CD8-positive, alpha-beta T cell (primary cell): ENCODE measurements at regions of chr5 and their contacts with region 1.

Region 1: DNA sequence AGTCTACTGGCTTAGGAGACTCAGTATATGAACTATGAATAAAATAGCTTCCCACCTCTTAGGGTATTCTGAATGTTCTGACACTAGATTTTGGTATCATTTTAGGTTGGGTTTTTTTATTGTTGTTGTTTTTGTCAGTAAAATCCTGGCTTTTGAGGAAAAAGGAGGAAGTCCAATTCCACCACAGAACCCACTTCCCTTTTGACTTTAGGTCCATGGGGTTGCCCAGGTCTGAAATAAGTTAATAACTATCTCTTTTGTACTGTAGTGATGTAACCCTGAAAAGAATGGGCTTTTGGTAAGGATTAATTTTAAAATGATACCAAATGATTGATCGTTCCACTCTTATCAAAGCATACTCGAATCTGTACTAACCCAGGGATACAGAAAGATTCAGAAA is 29.1 kb upstream of the IL12B start:
- DNase-seq: no peak
- ATAC-seq: no peak
- H3K4me3 ChIP-seq: no peak overlapping the region
- H3K4me3 Mint-ChIP-seq: no peak overlapping the region
- H3K27ac ChIP-seq: no peak overlapping the region
- H3K27ac Mint-ChIP-seq: no peak overlapping the region
- H3K4me1 ChIP-seq: no peaks in the 10 kb centered on the region
- H3K4me1 Mint-ChIP-seq: peaks cover 4% of the 10 kb centered on the region
- H3K27me3 ChIP-seq: no peaks in the 10 kb centered on the region
- H3K27me3 Mint-ChIP-seq: peaks cover 2% of the 10 kb centered on the region
- CTCF ChIP-seq: no peak

Region 2: DNA sequence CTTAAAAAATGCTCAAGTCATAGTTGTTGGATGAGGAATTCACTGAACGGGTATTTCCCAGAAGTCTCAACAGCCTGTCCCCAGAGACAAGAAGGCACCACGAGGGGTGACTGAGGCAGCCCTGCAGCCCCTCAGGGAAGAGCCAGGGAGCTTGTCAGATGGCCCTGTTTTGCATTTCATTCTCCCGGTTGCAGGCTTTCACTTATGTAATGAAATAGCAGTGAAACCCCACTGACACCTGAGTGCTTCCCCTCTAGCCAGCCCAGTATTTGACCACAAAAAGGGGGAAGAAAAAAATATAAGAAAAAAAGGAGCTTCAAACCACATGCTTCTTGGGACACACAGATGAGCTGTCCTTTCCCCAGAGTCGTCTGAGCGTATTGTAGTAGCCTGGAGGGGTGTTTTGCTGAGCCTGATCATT is 46.2 kb after region 1 on chr5:
- CTCF ChIA-PET with region 1: no interaction called
- POLR2A ChIA-PET with region 1: no interaction called
- intact Hi-C with region 1: loop called in 1 of 2 experiments (anchors 5 kb)
- DNase-seq: peak in 1 of 9 experiments; percentile 29
- ATAC-seq: no peak
- H3K4me3 ChIP-seq: no peak overlapping the region
- H3K4me3 Mint-ChIP-seq: no peak overlapping the region
- H3K27ac ChIP-seq: no peak overlapping the region
- H3K27ac Mint-ChIP-seq: no peak overlapping the region
- H3K4me1 ChIP-seq: no peaks in the 10 kb centered on the region
- H3K4me1 Mint-ChIP-seq: peaks cover 12% of the 10 kb centered on the region
- H3K27me3 ChIP-seq: no peaks in the 10 kb centered on the region
- H3K27me3 Mint-ChIP-seq: peaks cover 6% of the 10 kb centered on the region
- CTCF ChIP-seq: no peak